B cell (primary cell): ENCODE measurements at regions of chr16 and their contacts with region 1.

Region 1: DNA sequence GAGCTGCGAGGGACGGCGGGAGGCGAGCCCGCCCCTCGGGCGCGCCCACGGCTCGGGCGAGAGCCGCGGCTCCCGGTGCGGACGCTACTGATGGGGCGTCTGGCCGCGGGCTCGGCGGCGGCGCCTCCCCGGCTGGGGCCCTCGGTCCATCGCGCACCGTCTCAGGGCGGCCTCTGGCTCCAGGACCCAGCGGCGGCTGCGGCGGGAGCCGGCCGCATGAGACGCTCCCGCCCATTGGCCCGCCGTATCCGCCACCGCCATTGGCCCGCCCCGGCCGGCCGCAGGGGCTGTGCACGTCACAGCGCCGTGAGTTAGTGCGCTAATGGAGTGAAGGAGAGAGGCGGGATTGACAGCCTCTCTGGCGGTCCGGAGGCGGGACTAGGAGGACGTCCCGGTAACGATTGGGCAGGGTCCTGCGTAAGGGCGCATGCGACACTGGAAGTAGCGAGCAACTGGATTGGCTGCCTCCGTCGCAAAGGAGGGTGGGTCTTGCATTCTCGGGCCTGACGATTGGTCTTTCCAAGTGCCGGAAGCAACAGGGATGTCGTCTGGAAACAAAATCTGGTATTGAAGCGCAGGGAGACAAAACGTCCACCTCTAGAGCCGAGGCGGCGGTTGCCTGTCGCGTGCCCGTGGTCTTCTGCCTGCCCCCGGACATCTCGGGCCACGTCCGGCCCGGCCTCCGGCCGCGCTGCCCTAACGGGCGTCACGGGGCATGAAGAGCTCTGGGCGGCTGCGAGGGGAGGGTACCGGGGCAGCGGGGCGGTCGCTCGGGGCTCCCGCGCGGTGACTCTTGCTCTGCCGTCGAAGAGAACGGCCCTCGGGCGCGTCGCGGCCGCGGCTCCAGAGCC is at the start of gene ANKRD11:
- DNase-seq: peak; percentile 99
- ATAC-seq: peak; percentile 81
- H3K4me3 ChIP-seq: peak within 1 kb of the TSS; percentile 59 to 93 (median 86)
- H3K4me3 Mint-ChIP-seq: peak within 1 kb of the TSS; percentile 93
- H3K27ac ChIP-seq: peak within 1 kb of the TSS; percentile 91 to 97
- H3K27ac Mint-ChIP-seq: peak within 1 kb of the TSS; percentile 97
- H3K4me1 ChIP-seq: peaks cover 41 to 46% of the 10 kb centered on the region in 2 donors
- H3K4me1 Mint-ChIP-seq: peaks cover 56% of the 10 kb centered on the region
- H3K27me3 ChIP-seq: no peaks in the 10 kb centered on the region
- H3K27me3 Mint-ChIP-seq: no peaks in the 10 kb centered on the region
- CTCF ChIP-seq: no peak
- total RNA-seq, gene ANKRD11: 314 and 320 TPM in 2 replicates

Region 2: DNA sequence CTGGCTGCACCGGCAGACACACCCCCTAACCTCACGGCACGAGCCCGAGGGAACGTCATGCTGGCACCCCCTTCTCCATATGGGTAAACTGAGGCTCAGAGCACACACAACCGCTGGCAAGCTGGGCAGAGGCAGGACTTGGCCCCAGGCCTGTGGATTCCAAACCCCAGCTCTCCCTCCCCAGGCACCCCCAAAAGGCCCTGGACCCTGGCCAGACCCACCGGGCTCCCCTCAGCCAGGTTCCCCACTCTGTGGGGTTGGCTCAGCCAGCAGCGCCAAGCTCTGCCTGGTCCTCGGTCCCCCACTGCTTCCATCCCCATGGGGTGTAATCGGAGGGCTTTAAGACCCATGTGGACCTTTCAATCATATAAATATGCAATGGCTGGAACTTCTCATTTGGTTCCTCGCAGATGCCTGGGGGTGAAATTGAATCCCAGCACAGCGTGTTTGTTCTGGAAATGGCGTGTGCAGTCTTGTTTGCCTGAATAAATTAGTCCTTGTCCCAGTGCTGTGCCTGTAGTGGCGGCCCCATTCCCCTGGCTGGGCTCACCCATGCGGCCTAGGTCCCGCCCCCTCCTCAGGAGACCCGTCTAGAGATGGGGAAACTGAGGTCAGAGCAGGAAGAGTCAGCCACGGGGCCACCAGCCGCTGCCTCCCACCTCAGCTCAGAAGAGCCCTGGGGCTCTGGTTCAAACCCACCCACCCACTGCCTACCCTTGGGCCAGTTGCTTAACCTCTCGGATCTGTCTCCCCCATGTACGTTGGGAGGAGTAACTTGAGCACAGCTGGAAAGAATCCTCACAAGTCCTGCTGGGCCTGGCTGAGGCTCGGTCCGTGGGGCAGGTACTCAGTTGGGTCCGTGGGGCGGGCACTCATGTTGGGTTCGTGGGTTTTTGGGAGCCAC is 980.3 kb before region 1 on chr16:
- CTCF ChIA-PET with region 1: no interaction called
- POLR2A ChIA-PET with region 1: no interaction called
- intact Hi-C with region 1: no loop called
- DNase-seq: no peak
- ATAC-seq: no peak
- H3K4me3 ChIP-seq: no peak overlapping the region
- H3K4me3 Mint-ChIP-seq: no peak overlapping the region
- H3K27ac ChIP-seq: no peak overlapping the region
- H3K27ac Mint-ChIP-seq: no peak overlapping the region
- H3K4me1 ChIP-seq: no peaks in the 10 kb centered on the region
- H3K4me1 Mint-ChIP-seq: no peaks in the 10 kb centered on the region
- H3K27me3 ChIP-seq: no peaks in the 10 kb centered on the region
- H3K27me3 Mint-ChIP-seq: no peaks in the 10 kb centered on the region
- CTCF ChIP-seq: no peak

Region 3: GRCh38 chr16:89115216-89115861 is 375.3 kb before region 1 on chr16:
- CTCF ChIA-PET with region 1: no interaction called
- POLR2A ChIA-PET with region 1: no interaction called
- intact Hi-C with region 1: loop called (anchors 2 kb)
- DNase-seq: peak; percentile 96
- ATAC-seq: peak; percentile 84
- H3K4me3 ChIP-seq: peak overlapping the region; percentile 35 to 57 (median 51)
- H3K4me3 Mint-ChIP-seq: peak overlapping the region; percentile 88
- H3K27ac ChIP-seq: peak overlapping the region; percentile 83 to 85
- H3K27ac Mint-ChIP-seq: peak overlapping the region; percentile 99
- H3K4me1 ChIP-seq: peaks cover 42 to 44% of the 10 kb centered on the region in 2 donors
- H3K4me1 Mint-ChIP-seq: peaks cover 8% of the 10 kb centered on the region
- H3K27me3 ChIP-seq: no peaks in the 10 kb centered on the region
- H3K27me3 Mint-ChIP-seq: no peaks in the 10 kb centered on the region
- CTCF ChIP-seq: no peak

Region 4: GRCh38 chr16:89363621-89364393 is 126.8 kb before region 1 on chr16:
- CTCF ChIA-PET with region 1: interaction called, 6 read pairs
- POLR2A ChIA-PET with region 1: interaction called, 3 read pairs
- intact Hi-C with region 1: loop called (anchors 2 kb)
- DNase-seq: no peak
- ATAC-seq: no peak
- H3K4me3 ChIP-seq: no peak overlapping the region
- H3K4me3 Mint-ChIP-seq: peak overlapping the region; percentile 13
- H3K27ac ChIP-seq: no peak overlapping the region
- H3K27ac Mint-ChIP-seq: peak overlapping the region; percentile 37
- H3K4me1 ChIP-seq: peaks cover 73 to 80% of the 10 kb centered on the region in 2 donors
- H3K4me1 Mint-ChIP-seq: peaks cover 91% of the 10 kb centered on the region
- H3K27me3 ChIP-seq: no peaks in the 10 kb centered on the region
- H3K27me3 Mint-ChIP-seq: no peaks in the 10 kb centered on the region
- CTCF ChIP-seq: no peak

Region 5: DNA sequence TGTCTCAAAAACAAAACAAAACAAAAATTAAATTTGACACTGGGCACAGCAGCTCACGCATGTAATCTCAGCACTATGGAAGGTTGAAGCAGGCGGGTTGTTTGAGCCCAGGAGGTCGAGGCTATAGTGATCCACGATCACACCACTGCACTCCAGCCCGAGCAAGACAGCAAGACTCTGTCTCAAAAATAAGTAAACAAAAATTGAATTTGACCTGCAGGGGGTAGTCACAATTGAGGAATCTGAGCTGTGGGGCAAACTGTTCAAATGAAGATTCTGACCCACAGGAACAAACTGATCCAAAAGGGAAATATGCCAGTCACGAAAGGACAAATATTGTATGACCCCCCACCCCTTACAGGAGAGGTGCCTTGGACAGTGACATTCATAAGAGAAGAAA is 30.1 kb before region 1 on chr16:
- CTCF ChIA-PET with region 1: no interaction called
- POLR2A ChIA-PET with region 1: interaction called, 3 read pairs
- intact Hi-C with region 1: loop called (anchors 2 kb)
- DNase-seq: peak; percentile 55
- ATAC-seq: peak; percentile 31
- H3K4me3 ChIP-seq: no peak overlapping the region
- H3K4me3 Mint-ChIP-seq: no peak overlapping the region
- H3K27ac ChIP-seq: no peak overlapping the region
- H3K27ac Mint-ChIP-seq: no peak overlapping the region
- H3K4me1 ChIP-seq: peaks cover 3 to 6% of the 10 kb centered on the region in 2 donors
- H3K4me1 Mint-ChIP-seq: peaks cover 39% of the 10 kb centered on the region
- H3K27me3 ChIP-seq: no peaks in the 10 kb centered on the region
- H3K27me3 Mint-ChIP-seq: no peaks in the 10 kb centered on the region
- CTCF ChIP-seq: no peak

Region 6: DNA sequence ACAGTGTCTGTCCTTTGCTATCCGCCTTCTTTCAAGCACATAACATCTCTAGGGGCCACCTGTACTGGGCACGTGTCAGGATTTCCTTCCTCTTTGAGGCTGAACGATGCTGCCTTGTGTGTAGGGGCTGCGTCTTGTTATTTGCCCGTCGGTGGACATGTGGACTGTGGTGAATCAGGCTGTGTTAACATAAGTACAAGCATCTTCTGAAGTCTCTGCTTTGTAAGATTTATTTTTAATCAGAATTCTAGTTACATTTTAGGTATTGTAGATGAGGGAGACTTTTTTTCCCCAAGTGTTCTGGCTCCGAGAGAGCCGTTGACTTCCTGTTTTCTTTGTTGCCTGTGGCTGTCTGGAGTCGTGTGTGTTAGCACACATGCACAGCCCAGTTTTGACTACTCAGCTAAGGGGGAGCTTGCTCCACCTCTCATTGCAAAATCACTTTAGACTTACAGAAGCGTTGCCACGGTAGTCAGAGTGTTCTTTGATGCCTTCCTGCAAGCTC is 43.7 kb after region 1 on chr16:
- CTCF ChIA-PET with region 1: no interaction called
- POLR2A ChIA-PET with region 1: no interaction called
- intact Hi-C with region 1: loop called (anchors 2 kb)
- DNase-seq: peak; percentile 82
- ATAC-seq: peak; percentile 91
- H3K4me3 ChIP-seq: peak overlapping the region in 4 of 5 experiments; percentile 13 to 39 (median 22)
- H3K4me3 Mint-ChIP-seq: peak overlapping the region; percentile 80
- H3K27ac ChIP-seq: peak overlapping the region; percentile 43 to 81
- H3K27ac Mint-ChIP-seq: peak overlapping the region; percentile 88
- H3K4me1 ChIP-seq: peaks cover 23 to 24% of the 10 kb centered on the region in 2 donors
- H3K4me1 Mint-ChIP-seq: peaks cover 22% of the 10 kb centered on the region
- H3K27me3 ChIP-seq: no peaks in the 10 kb centered on the region
- H3K27me3 Mint-ChIP-seq: no peaks in the 10 kb centered on the region
- CTCF ChIP-seq: no peak